Astrocyte of the spinal cord (primary cell): ENCODE measurements at regions of chr13 and their contacts with region 1.

Region 1: GRCh38 chr13:20495082-20496023 is 30.3 kb downstream of the CRYL1 start:
- DNase-seq: peak; percentile 71
- H3K4me3 ChIP-seq: no peak overlapping the region
- CTCF ChIP-seq: peak; percentile 96

Region 2: DNA sequence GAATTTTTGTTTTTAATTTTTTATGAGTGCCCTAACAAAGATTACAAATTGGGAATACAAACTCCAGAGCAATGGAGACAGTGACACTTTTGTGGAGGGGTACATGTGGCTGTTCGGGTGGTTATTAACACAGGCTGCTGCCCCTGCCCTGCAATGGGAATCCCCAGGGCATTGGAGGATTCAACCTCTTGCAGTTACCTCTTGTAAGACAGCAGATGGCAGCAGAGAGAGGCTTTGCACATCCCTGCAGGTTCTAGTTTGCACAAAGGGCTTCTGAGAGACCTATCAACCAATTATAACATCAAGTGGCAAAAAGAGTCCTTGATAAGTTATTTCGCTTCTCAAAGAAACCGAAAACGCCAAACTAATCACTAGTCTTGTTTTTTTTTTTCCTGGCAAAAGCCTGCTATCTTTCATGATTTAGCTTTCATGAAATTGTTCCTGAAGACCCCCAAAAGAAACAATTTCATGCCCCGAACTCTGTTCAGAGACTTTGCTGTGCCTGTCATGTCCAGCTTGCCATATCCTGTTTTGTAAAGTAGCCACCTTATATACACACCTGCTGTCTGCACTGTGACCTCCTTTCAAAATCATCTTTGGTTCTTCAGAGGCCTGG is 313.0 kb before region 1 on chr13:
- in situ Hi-C with region 1: loop called (anchors 25 kb)
- DNase-seq: peak; percentile 72
- H3K4me3 ChIP-seq: no peak overlapping the region
- CTCF ChIP-seq: peak; percentile 91